ENCODE measurements at regions of chr13 and their contacts with region 1.

Region 1: GRCh38 chr13:49278211-49278610 is 30.5 kb downstream of the CDADC1 start:
- DNase-seq: no peak
- H3K4me3 Mint-ChIP-seq: no peak overlapping the region
- H3K27ac Mint-ChIP-seq: no peak overlapping the region
- H3K4me1 Mint-ChIP-seq: no peaks in the 10 kb centered on the region
- H3K27me3 Mint-ChIP-seq: no peaks in the 10 kb centered on the region

Region 2: DNA sequence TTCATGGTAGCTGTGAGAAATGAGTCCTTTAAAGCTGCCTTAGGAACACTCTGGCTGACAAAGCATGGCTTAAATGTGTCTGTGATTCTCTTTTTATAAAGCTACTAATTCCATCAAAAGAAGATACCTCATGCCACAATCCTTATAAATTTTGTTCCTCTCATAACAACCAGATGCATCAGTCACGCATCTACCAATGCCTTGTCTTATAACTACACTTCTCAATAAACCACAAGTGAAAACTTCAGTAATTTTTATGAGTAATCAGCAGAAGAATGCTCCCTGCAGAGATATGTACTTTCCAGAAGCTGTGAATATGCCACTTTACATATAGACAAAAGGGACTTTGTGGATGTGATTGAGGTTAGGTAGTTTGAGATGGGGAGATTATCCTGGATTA is 1425.0 kb before region 1 on chr13:
- CTCF ChIA-PET with region 1: no interaction called
- intact Hi-C with region 1: no loop called
- DNase-seq: no peak
- H3K4me3 Mint-ChIP-seq: no peak overlapping the region
- H3K27ac Mint-ChIP-seq: no peak overlapping the region
- H3K4me1 Mint-ChIP-seq: no peaks in the 10 kb centered on the region
- H3K27me3 Mint-ChIP-seq: peaks cover 2% of the 10 kb centered on the region

Region 3: GRCh38 chr13:49052776-49053175 is 225.4 kb before region 1 on chr13:
- CTCF ChIA-PET with region 1: no interaction called
- intact Hi-C with region 1: no loop called
- DNase-seq: no peak
- H3K4me3 Mint-ChIP-seq: no peak overlapping the region
- H3K27ac Mint-ChIP-seq: no peak overlapping the region
- H3K4me1 Mint-ChIP-seq: peaks cover 20% of the 10 kb centered on the region
- H3K27me3 Mint-ChIP-seq: no peaks in the 10 kb centered on the region

Region 4: DNA sequence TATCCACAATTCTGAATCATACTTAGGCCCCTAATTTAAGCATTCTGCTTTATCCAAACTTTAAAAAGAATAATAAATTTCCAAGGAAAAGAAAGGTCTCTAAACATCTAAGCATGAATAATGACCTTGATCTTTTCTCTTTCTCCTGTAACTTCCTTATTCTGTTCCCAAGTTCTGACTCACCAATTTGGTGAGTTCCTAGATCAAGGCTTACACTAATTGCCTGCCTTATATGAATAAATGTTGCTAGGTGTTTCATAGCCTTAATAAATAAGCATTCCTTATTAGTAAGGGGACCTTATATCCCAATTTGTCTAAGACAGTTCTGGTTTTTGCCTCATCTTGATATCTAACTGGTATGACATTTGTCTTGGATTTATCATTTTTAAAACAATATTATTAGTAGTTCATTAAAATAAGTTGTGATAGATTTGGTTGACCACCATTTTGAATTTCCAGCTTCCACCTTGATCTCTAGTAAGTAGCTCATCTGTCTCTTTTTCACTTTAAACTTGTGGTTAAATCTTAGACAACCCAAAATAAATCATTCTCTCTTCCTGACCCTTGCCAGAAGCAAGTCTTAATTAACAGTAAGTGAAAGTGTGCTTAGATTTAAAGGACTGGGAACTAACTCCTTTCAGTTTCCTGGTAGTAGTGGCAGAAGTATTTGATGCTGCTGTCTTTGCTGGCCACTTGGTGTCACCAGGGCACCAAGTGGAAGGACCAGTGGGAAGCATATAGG is 179.3 kb before region 1 on chr13:
- CTCF ChIA-PET with region 1: interaction called, 7 read pairs
- intact Hi-C with region 1: loop called (anchors 1 kb)
- DNase-seq: peak; percentile 9
- H3K4me3 Mint-ChIP-seq: no peak overlapping the region
- H3K27ac Mint-ChIP-seq: peak overlapping the region; percentile 60
- H3K4me1 Mint-ChIP-seq: peaks cover 22% of the 10 kb centered on the region
- H3K27me3 Mint-ChIP-seq: no peaks in the 10 kb centered on the region

Region 5: GRCh38 chr13:49240017-49240416 is 38.2 kb before region 1 on chr13:
- CTCF ChIA-PET with region 1: interaction called, 11 read pairs
- intact Hi-C with region 1: loop called (anchors 1 kb)
- DNase-seq: peak; percentile 65
- H3K4me3 Mint-ChIP-seq: no peak overlapping the region
- H3K27ac Mint-ChIP-seq: no peak overlapping the region
- H3K4me1 Mint-ChIP-seq: no peaks in the 10 kb centered on the region
- H3K27me3 Mint-ChIP-seq: peaks cover 3% of the 10 kb centered on the region

Region 6: DNA sequence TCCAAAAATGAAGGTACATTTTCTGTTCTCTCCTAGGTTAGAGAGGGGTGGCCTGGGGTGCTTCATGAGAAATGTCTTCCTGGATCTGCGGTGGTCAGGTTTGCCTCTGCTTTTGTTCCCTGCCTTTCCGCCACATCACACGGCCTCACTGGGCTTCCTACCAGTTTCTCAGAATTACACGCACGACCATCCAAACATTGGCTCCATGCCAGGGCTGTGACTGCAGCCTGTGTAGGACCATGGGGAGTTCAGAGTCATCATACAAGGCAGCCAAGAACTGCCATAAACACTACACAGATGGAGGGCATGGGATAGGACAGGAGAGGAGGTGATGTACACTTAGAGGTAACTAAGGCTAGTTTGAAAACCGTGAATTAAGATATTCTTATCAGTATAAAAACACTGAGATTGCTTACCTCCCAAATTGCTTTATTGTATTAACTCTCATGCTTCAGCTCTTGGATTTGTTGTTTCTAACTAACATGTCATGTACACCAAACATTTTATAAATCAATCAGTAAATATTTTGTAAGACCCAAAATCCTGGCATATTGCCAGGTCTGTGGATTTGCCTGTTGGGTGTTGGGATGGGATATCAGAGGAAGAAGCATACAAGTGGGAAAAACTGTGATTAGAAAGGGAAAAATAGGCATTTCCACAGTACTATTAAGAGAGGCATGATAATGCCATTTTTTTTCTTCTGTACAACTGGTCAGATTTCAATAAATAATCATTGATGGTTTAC is 14.7 kb after region 1 on chr13:
- CTCF ChIA-PET with region 1: interaction called, 19 read pairs
- intact Hi-C with region 1: no loop called
- DNase-seq: no peak
- H3K4me3 Mint-ChIP-seq: no peak overlapping the region
- H3K27ac Mint-ChIP-seq: no peak overlapping the region
- H3K4me1 Mint-ChIP-seq: peaks cover 3% of the 10 kb centered on the region
- H3K27me3 Mint-ChIP-seq: no peaks in the 10 kb centered on the region